ENCODE measurements at regions of chr9 and their contacts with region 1.

Region 1: DNA sequence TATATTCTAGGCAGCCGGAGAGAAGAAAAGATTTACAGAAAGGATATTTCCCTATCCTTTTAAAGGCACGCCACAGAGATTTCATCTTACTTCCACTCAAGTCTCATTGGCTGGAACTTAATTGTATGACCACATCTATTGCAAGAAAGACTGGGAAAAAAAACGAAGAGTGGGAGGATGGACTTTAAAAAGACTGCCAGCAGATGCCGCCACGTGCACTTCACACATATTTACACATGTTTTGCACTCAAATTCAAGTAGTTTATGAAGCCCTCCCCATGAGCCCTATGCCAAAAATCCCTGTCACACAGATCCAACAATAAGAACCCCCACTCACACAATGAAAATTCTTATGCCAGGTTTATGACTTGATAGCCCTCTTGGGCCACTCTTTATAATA is 138.5 kb upstream of the TYRP1 start:
- DNase-seq: peak; percentile 32
- H3K4me3 ChIP-seq: no peak overlapping the region
- H3K27ac ChIP-seq: no peak overlapping the region
- H3K4me1 ChIP-seq: no peaks in the 10 kb centered on the region
- H3K27me3 ChIP-seq: peaks cover 0 to under 1% of the 10 kb centered on the region in 2 experiments
- CTCF ChIP-seq: peak in 1 of 2 donors; percentile 7
- POLR2A ChIP-seq: no peak

Region 2: GRCh38 chr9:12566404-12567090 is 11.9 kb after region 1 on chr9:
- CTCF ChIA-PET with region 1: interaction called, 15 read pairs
- POLR2A ChIA-PET with region 1: no interaction called
- dilution Hi-C with region 1: no loop called
- intact Hi-C with region 1: no loop called
- DNase-seq: no peak
- H3K4me3 ChIP-seq: no peak overlapping the region
- H3K27ac ChIP-seq: no peak overlapping the region
- H3K4me1 ChIP-seq: no peaks in the 10 kb centered on the region
- H3K27me3 ChIP-seq: peaks cover 3 to 12% of the 10 kb centered on the region in 2 experiments
- CTCF ChIP-seq: no peak
- POLR2A ChIP-seq: no peak

Region 3: DNA sequence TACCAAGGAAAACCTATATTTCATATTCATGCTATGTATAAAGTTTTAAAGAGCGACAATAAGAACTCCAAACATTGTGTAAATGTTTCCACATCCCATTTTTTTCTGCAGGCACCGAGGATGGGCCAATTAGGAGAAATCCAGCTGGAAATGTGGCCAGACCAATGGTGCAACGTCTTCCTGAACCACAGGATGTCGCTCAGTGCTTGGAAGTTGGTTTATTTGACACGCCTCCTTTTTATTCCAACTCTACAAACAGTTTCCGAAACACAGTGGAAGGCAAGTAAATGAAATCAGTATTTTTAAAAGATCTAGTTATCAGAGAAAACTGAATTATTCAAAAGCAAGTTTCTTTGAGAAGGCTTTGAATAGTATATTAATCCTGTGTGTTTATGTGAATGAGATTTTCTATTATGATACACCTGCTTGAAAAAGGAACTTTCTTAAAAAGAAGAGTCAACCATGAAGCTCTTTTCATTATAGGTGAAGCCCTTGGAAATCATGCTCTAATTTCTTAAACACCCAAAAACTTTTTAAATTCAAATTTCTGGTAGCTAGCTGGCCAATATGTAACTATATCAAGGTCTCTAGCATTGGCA is 147.6 kb after region 1 on chr9:
- CTCF ChIA-PET with region 1: interaction called, 6 read pairs
- POLR2A ChIA-PET with region 1: no interaction called
- dilution Hi-C with region 1: no loop called
- intact Hi-C with region 1: loop called (anchors 2 kb)
- DNase-seq: peak; percentile 70
- H3K4me3 ChIP-seq: no peak overlapping the region
- H3K27ac ChIP-seq: no peak overlapping the region
- H3K4me1 ChIP-seq: no peaks in the 10 kb centered on the region
- H3K27me3 ChIP-seq: no peaks in the 10 kb centered on the region
- CTCF ChIP-seq: peak; percentile 58 to 62
- POLR2A ChIP-seq: no peak